Lower leg skin (tissue), 4 donors: ENCODE measurements at regions of chr6 and their contacts with region 1.

Region 1: DNA sequence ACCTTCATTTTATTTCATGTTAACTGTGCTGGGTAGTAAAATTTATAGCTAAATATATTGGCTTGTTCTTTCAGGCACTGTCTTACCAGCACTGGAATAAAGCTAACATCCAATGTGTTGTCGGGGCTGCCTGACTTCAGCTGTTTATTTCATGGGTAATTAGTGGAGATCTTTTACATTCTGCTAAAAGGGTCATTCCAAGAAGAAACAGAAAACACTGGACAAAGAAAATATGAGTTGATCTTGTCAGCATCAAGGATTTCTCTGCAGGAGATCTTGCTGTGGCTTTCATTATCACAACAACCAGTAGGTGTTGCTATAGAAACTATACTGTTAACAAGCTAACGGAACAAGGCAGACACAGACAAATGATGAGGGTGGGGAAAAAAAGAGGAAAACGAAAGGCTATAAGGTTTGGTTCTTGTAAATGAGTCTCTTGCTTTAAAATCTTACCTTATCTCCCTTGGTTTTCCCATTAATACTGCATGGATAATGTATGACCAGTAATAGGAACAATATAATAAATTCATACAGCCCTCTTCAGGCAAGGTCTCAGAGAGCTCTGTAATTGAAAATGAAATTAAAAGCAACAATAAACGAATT is 206.8 kb downstream of the SIM1 start:
- DNase-seq: no peak
- H3K4me3 ChIP-seq: no peak overlapping the region
- CTCF ChIP-seq: no peak
- POLR2A ChIP-seq: no peak

Region 2: GRCh38 chr6:100944644-100945043 is 686.8 kb after region 1 on chr6:
- intact Hi-C with region 1: loop called (anchors 5 kb)
- DNase-seq: no peak
- H3K4me3 ChIP-seq: no peak overlapping the region
- CTCF ChIP-seq: no peak
- POLR2A ChIP-seq: no peak